PC-9 (cell line): ENCODE measurements at regions of chr11 and their contacts with region 1.

Region 1: DNA sequence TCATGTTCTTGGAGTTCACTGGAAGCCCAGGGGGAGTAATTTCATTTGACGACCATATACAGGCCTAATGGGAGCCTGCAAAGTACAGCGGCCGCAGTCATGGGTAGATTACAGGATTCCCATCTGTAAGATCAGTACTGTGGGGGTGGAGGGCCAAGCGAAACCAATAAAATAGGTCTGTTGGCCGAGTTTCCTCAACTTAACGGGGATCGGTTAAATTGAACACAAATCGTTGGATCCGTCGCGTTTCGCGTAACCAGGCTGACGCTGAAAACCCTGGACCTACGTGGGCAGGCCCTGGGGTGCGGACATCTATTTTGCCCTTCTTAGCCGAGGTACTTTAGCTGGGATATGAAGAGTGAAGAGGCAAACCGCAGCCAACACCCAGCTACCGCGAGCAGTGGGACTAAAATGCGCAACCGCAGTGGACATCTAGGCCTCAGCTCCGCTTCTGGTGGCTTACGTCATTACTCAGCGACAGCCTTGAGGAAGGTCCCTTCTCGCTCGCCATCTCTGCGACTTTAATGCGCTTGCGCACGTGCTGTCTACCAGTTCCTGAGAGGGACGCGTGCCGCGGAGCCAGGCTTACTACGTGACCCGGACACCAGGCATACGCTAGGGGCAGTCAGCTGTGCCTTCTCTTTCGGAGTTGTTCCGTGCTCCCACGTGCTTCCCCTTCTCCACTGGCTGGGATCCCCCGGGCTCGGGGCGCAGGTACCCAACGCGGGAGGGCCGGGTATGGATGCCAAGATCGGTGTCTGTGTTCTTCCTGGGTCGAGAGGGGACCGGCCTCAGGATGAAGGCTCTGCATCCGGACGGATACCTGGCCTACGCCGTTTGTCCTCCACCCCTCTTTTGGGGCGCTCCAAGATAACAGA is at the start of gene NAT10:
- DNase-seq: peak; percentile 97
- H3K4me3 ChIP-seq: peak within 1 kb of the TSS; percentile 88
- H3K27ac ChIP-seq: peak within 1 kb of the TSS; percentile 90
- H3K4me1 ChIP-seq: peaks cover 20% of the 10 kb centered on the region
- H3K27me3 ChIP-seq: no peaks in the 10 kb centered on the region
- CTCF ChIP-seq: no peak
- total RNA-seq, gene NAT10: 53.2 and 62.3 TPM in 2 replicates

Region 2: DNA sequence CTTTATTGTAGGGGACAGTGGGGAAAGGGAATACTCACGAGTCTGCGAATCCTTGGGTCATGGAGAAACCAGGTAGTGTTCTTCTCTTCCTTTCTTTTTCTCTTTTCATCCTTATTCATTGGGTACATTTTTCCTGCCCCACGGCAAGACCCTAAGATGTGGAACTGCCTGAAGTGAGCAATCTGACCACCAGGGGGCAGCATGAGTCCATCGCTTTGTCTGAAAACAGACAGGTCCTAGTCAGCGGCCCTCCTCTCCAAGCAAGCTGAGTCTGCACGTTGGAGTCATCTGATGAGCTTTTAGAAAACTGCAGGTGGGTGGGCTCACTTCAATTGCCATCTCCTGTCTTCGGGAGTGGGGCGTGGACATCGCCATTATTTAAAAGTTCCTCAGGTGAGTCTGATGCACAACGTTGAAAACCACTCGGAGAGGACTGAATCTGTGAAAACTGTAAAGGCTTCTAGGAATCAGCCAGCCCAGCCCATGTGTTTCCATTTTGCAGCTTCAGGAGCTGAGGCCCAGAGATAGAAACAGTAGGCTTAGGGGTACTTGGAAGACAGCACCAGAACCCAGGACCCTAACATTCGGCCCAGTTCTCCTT is 297.0 kb before region 1 on chr11:
- CTCF ChIA-PET with region 1: interaction called, 16 read pairs
- POLR2A ChIA-PET with region 1: no interaction called
- intact Hi-C with region 1: no loop called
- DNase-seq: peak; percentile 65 to 84
- H3K4me3 ChIP-seq: no peak overlapping the region
- H3K27ac ChIP-seq: no peak overlapping the region
- H3K4me1 ChIP-seq: no peaks in the 10 kb centered on the region
- H3K27me3 ChIP-seq: no peaks in the 10 kb centered on the region
- CTCF ChIP-seq: peak; percentile 98

Region 3: DNA sequence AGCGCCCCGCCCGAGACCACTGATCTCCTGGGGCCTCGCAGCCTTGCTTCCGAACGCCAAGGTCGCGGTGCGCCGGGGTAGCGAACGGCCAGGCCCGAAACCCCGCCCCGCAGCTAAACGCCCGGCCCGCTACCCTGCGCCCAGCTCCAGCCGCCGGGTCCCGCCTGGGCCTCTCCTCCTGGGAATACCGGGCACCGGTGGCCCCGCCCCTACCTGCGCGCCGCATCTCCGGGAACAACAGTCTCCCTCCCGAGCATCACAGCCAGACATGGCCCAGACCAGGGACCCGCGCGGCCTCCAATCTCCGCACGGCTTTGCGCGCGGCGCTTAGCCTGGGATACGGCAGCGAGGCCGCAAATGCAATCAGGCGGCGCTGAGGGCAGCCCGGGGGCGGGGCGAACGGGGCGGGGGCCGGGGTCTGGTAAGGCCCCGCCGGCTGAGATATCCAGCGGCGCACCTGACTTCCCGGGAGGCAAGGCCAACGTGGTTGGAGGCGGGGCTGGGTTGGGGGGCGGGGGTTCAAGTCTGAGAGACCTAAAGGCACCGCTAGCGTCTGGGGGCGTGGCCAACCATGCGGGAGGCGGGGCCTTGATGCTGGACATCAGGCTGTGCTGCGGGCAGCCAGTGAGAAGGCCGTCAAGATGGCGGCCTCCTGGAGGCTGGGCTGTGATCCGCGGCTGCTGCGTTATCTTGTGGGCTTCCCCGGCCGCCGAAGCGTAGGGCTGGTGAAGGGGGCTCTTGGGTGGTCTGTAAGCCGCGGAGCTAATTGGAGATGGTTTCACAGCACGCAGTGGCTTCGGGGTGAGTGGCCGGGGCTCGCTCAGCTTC is 810.9 kb after region 1 on chr11 and contains the starts of genes APIP and PDHX:
- CTCF ChIA-PET with region 1: no interaction called
- POLR2A ChIA-PET with region 1: no interaction called
- intact Hi-C with region 1: loop called (anchors 10 kb)
- DNase-seq: peak; percentile 98 to 99
- H3K4me3 ChIP-seq: peak within 1 kb of the TSS; percentile 74
- H3K27ac ChIP-seq: peak within 1 kb of the TSS; percentile 83
- H3K4me1 ChIP-seq: peaks cover 26% of the 10 kb centered on the region
- H3K27me3 ChIP-seq: no peaks in the 10 kb centered on the region
- CTCF ChIP-seq: no peak
- total RNA-seq, gene APIP: 34.1 and 41.0 TPM in 2 replicates
- total RNA-seq, gene PDHX: 44.7 and 47.0 TPM in 2 replicates